Activated B cell treated with CpG ODN at 0.5 μM for 24 hours (primary cell): ENCODE measurements at regions of chr7 and their contacts with region 1.

Region 1: DNA sequence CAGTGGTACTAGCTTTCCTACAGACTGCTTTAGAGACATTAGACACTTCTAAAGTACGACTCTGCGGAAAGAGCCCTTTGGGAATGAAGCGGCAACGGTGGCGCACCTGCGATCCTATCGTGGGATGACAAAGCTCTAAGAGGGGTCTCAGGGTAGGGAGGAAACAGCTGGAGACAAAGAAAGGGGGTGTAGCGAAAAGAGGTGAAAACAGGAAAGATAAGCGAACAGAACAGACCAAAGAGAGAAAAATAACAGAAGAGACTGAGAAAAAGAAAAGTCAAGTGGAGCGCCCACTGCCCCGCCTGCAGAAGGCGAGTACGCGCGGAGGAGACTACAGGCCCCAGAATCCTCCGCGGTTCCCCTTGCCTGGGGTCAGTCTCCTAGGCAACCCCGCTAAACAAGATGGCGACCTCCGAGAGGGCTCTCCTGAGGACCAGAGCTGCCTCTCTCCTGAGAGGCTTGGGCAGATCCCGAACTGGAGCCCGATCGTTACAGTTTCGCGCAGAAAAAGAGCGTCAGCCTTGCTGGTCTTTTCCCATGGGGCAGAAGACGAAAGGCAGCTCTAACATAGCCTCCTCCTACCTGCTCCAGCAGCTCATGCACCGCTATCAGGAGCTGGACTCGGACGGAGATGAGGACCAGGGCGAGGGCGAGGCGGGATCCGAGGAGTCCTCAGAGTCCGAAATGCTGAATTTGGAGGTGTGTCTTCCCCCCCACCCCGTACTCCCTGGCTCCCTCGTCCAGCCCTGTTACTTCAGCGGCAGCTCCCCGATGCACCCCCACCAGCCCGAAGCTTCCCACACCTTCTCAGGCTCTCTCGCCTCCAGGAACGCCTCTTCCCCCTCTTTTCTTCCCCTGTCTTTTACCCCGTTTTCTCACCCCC is at the start of gene LRGUK:
- DNase-seq: peak; percentile 65
- ATAC-seq: peak; percentile 100
- H3K4me3 Mint-ChIP-seq: peak within 1 kb of the TSS; percentile 88
- H3K27ac Mint-ChIP-seq: no peak within 1 kb of the TSS
- H3K4me1 Mint-ChIP-seq: peaks cover 12% of the 10 kb centered on the region
- H3K27me3 Mint-ChIP-seq: peaks cover 4% of the 10 kb centered on the region
- CTCF ChIP-seq: no peak
- total RNA-seq, gene LRGUK: 0.91 and 1.0 TPM in 2 replicates

Region 2: DNA sequence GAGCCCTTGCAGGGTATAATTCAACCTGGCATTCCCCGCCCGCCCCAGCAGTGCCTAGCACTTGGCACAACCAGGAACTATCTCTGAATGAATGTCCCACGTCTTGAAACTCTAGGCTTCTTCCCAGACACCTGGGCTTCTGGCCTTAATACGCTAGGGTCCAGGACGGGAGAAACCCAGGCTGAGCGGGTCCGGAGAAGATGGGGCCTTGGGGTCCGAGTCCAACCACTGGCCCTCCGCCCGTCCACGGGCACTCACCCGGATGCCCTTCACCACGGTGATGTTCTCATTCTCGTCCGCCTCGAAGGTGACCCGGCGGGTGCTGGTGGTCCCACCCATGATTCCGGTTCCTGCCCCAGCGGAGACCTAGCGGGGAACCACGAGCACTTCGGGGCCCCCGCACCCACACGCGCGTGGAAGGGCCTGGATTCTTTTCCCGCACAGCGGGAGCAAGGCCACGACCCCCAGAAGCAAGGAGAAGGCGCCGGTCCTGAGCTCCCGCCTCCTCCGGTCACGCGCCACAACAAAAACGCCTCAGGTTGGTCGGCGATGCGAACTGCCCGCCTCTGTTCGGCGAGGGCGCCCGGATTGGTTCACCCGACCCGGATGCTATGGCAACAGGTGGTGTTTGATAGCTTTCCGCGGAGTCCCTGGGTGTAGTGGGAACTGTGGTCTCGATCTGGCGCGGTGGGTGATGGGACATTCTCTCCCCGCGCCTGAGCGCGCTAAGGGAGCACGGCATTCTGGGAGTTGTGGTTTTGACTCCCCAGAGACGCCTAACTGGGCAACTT is 1045.4 kb before region 1 on chr7 and contains the start of gene CHCHD3:
- CTCF ChIA-PET with region 1: no interaction called
- POLR2A ChIA-PET with region 1: no interaction called
- intact Hi-C with region 1: loop called (anchors 1 kb)
- DNase-seq: peak; percentile 91
- ATAC-seq: peak; percentile 98
- H3K4me3 Mint-ChIP-seq: peak within 1 kb of the TSS; percentile 94
- H3K27ac Mint-ChIP-seq: peak within 1 kb of the TSS; percentile 94
- H3K4me1 Mint-ChIP-seq: peaks cover 30% of the 10 kb centered on the region
- H3K27me3 Mint-ChIP-seq: no peaks in the 10 kb centered on the region
- CTCF ChIP-seq: no peak
- total RNA-seq, gene CHCHD3: 53.6 and 56.3 TPM in 2 replicates

Region 3: GRCh38 chr7:134084488-134085144 is 42.6 kb before region 1 on chr7:
- CTCF ChIA-PET with region 1: no interaction called
- POLR2A ChIA-PET with region 1: interaction called, 5 read pairs
- intact Hi-C with region 1: loop called (anchors 5 kb)
- DNase-seq: no peak
- ATAC-seq: peak; percentile 54
- H3K4me3 Mint-ChIP-seq: no peak overlapping the region
- H3K27ac Mint-ChIP-seq: no peak overlapping the region
- H3K4me1 Mint-ChIP-seq: peaks cover 15% of the 10 kb centered on the region
- H3K27me3 Mint-ChIP-seq: no peaks in the 10 kb centered on the region
- CTCF ChIP-seq: no peak

Region 4: DNA sequence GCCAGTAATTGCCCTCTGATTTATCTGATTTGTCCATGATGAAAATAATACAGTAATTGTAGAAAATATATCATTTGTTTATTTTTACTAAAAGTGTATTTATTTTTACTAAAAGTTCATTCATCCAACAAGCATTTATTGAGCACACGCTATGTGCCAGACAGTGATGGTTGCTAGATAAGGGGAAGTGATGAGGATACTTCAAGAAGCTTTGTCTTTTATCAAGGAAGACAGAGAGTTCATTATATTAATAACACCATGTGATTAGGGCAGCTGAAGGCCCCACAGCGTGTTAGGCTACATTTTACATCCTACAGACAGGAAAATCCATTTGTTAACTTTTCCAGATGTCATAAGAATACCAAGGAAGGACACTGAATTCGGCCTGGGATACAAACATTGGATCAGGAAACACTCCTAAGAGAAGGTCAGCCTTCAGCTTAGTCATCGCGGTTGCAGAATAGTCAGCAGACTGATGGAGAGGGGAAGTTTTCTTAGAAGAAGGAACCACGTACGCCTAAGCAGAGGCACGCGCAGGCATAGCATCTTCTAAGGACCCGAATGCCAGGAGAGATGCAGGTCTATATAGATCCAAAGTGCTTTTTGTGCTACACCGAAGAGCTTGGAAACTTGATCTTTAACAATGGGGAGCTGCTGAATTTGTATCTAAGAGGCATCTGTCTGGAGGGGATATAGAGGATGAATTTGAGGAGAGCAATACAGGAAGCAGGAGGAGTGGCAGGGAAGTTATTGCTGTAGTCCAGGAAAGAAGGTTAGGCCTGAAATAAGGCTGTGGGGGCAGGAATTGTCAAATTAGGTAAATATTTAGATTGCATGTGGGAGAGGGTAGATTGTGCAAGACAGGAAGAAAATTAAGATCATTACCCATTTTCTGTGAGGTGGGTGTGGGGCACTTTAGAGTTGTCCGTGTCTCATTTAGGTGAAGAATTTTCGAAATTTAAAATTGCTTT is 85.7 kb after region 1 on chr7:
- CTCF ChIA-PET with region 1: no interaction called
- POLR2A ChIA-PET with region 1: no interaction called
- intact Hi-C with region 1: no loop called
- DNase-seq: no peak
- ATAC-seq: no peak
- H3K4me3 Mint-ChIP-seq: no peak overlapping the region
- H3K27ac Mint-ChIP-seq: no peak overlapping the region
- H3K4me1 Mint-ChIP-seq: no peaks in the 10 kb centered on the region
- H3K27me3 Mint-ChIP-seq: peaks cover 7% of the 10 kb centered on the region
- CTCF ChIP-seq: no peak

Region 5: GRCh38 chr7:135558337-135558767 is 1431.1 kb after region 1 on chr7:
- CTCF ChIA-PET with region 1: no interaction called
- POLR2A ChIA-PET with region 1: no interaction called
- intact Hi-C with region 1: loop called (anchors 5 kb)
- DNase-seq: peak; percentile 46
- ATAC-seq: peak; percentile 56
- H3K4me3 Mint-ChIP-seq: no peak overlapping the region
- H3K27ac Mint-ChIP-seq: no peak overlapping the region
- H3K4me1 Mint-ChIP-seq: peaks cover 16% of the 10 kb centered on the region
- H3K27me3 Mint-ChIP-seq: no peaks in the 10 kb centered on the region
- CTCF ChIP-seq: peak; percentile 29